ENCODE measurements at regions of chr2 and their contacts with region 1.

Region 1: DNA sequence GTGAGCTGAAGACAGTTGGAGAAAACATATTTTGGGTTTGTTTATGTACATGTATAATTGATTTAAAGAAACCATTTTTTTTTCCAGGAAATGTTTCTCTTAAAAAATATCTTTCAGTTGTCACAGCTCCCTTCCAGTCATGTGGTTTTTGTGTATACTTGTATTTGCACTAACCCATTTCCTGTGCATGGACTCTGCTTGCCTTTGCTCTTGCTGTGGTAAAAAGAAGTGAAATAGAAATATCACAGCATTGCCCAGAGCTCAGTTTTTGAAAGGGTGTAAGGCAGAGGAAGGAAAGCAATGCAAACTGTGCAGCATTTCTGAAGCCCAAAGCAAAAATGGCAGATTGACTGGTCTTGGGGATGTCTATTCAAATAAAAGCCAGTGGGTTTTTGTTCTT is 10.4 kb upstream of the DOCK10 start:
- DNase-seq: peak in 6 of 9 donors; percentile 53 to 82 (median 73)
- ATAC-seq: peak; percentile 90
- H3K4me3 ChIP-seq: peak overlapping the region; percentile 17
- H3K4me3 Mint-ChIP-seq: peak overlapping the region; percentile 43 to 77 (median 64)
- H3K27ac ChIP-seq: peak overlapping the region; percentile 55
- H3K27ac Mint-ChIP-seq: peak overlapping the region; percentile 60 to 94 (median 80)
- H3K4me1 ChIP-seq: peaks cover 42 to 45% of the 10 kb centered on the region in 2 donors
- H3K4me1 Mint-ChIP-seq: peaks cover 29 to 71% (median 67%) of the 10 kb centered on the region in 7 donors
- H3K27me3 ChIP-seq: no peaks in the 10 kb centered on the region
- H3K27me3 Mint-ChIP-seq: peaks cover 0 to 20% (median 0%) of the 10 kb centered on the region in 5 donors

Region 2: DNA sequence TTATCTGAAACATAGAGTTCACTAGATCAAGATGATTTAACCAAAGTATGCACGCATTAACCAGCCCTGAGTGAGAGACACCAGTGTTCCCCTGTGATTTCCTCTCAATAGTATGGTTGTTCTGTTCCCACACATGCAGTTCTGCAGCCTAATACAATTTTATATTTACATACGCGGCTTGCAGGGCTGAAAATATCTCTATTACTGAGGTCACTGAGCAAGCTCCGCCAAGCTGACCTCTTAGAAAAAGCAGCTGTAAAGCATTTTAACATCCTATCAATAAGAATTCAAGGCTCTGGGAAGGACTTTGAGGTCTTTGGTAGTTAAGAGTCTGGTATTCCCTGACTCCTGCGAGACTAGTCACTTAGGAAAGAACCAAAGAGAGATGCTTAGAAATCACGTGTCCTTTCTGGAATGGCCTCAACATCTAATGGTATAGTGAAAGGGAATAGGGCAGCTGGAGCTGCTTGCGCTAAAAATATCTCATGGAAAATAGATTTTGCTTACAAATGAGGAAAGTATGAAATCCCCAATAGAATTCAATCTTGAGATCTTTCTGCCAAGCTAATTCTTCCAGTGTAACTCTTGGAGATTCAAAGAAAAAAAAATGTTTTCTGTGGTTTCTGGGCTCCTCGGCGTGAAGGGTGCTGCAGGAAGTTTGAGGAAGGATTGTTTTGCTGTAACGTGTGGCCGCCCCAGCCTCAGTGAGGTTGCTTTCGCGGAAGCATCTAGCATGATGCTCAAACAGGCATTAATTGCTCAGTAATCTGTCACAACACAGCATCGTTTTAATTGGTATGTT is 69.6 kb before region 1 on chr2:
- CTCF ChIA-PET with region 1: no interaction called
- POLR2A ChIA-PET with region 1: no interaction called
- intact Hi-C with region 1: loop called in 1 of 2 experiments (anchors 2 kb)
- DNase-seq: peak in 7 of 9 donors; percentile 44 to 66 (median 52)
- ATAC-seq: peak; percentile 74
- H3K4me3 ChIP-seq: no peak overlapping the region
- H3K4me3 Mint-ChIP-seq: peak overlapping the region; percentile 63 to 85 (median 77)
- H3K27ac ChIP-seq: peak overlapping the region; percentile 50
- H3K27ac Mint-ChIP-seq: peak overlapping the region; percentile 85 to 97 (median 92)
- H3K4me1 ChIP-seq: peaks cover 42 to 58% of the 10 kb centered on the region in 2 donors
- H3K4me1 Mint-ChIP-seq: peaks cover 55 to 91% (median 89%) of the 10 kb centered on the region in 7 donors
- H3K27me3 ChIP-seq: no peaks in the 10 kb centered on the region
- H3K27me3 Mint-ChIP-seq: no peaks in the 10 kb centered on the region

Region 3: DNA sequence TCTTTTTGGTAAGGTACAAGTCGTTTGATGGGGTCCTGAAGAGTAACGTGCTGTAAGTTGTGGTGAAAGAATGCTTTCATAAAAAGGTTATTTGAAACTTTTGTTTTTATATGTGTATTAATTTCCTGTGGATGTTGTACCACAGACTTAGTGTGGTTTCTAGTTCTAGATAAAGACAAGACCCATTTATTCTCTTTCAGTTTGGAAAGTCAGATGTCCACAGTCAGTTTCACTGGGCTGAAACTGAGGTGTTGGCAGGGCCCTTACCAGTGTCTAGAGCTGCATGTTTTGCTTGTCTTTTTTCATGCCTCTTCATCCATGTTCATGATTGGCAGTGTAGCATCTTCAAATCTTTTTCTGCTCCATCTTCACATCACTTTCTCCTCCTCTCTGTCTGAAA is 11.7 kb after region 1 on chr2:
- CTCF ChIA-PET with region 1: interaction called, 3 read pairs
- POLR2A ChIA-PET with region 1: interaction called, 5 read pairs
- intact Hi-C with region 1: loop called in 1 of 2 experiments (anchors 1 kb)
- DNase-seq: no peak
- ATAC-seq: peak; percentile 24
- H3K4me3 ChIP-seq: no peak overlapping the region
- H3K4me3 Mint-ChIP-seq: peak overlapping the region; percentile 6 to 62 (median 40)
- H3K27ac ChIP-seq: no peak overlapping the region
- H3K27ac Mint-ChIP-seq: peak overlapping the region in 8 of 9 donors; percentile 26 to 80 (median 61)
- H3K4me1 ChIP-seq: peaks cover 10 to 14% of the 10 kb centered on the region in 2 donors
- H3K4me1 Mint-ChIP-seq: peaks cover 11 to 42% (median 35%) of the 10 kb centered on the region in 7 donors
- H3K27me3 ChIP-seq: no peaks in the 10 kb centered on the region
- H3K27me3 Mint-ChIP-seq: no peaks in the 10 kb centered on the region

Region 4: DNA sequence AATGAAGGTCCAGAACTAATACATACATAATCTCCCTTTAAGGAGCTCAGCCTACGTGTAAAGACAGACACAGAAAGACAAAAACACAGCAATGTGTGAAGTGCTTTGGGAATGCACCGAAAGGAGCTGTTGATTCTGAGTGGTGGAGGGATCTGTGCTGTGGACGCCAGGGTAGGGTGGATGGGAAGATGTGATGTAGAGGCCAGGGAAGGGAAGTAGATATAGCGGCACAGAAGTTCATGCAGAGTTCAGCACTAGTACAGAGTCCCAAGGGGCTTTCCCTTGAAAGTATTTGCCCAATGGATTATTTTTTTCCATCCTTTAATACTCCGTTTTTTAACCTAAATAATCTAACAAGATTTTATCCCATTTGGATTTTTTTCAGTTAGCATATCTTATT is 21.7 kb after region 1 on chr2:
- CTCF ChIA-PET with region 1: no interaction called
- POLR2A ChIA-PET with region 1: no interaction called
- intact Hi-C with region 1: loop called in 1 of 2 experiments (anchors 2 kb)
- DNase-seq: no peak
- ATAC-seq: no peak
- H3K4me3 ChIP-seq: no peak overlapping the region
- H3K4me3 Mint-ChIP-seq: no peak overlapping the region
- H3K27ac ChIP-seq: no peak overlapping the region
- H3K27ac Mint-ChIP-seq: peak overlapping the region in 2 of 9 donors; percentile 7 to 13
- H3K4me1 ChIP-seq: no peaks in the 10 kb centered on the region
- H3K4me1 Mint-ChIP-seq: peaks cover 1 to 28% (median 8%) of the 10 kb centered on the region in 7 donors
- H3K27me3 ChIP-seq: no peaks in the 10 kb centered on the region
- H3K27me3 Mint-ChIP-seq: peaks cover 0 to 30% (median 0%) of the 10 kb centered on the region in 5 donors

Region 5: GRCh38 chr2:225091336-225091735 is 38.6 kb after region 1 on chr2:
- CTCF ChIA-PET with region 1: interaction called, 3 read pairs
- POLR2A ChIA-PET with region 1: no interaction called
- intact Hi-C with region 1: loop called in 1 of 2 experiments (anchors 2 kb)
- DNase-seq: no peak
- ATAC-seq: no peak
- H3K4me3 ChIP-seq: no peak overlapping the region
- H3K4me3 Mint-ChIP-seq: no peak overlapping the region
- H3K27ac ChIP-seq: no peak overlapping the region
- H3K27ac Mint-ChIP-seq: no peak overlapping the region
- H3K4me1 ChIP-seq: peaks cover 0 to 4% of the 10 kb centered on the region in 2 donors
- H3K4me1 Mint-ChIP-seq: peaks cover 5 to 17% (median 9%) of the 10 kb centered on the region in 7 donors
- H3K27me3 ChIP-seq: no peaks in the 10 kb centered on the region
- H3K27me3 Mint-ChIP-seq: peaks cover 0 to 39% (median 0%) of the 10 kb centered on the region in 5 donors

Region 6: DNA sequence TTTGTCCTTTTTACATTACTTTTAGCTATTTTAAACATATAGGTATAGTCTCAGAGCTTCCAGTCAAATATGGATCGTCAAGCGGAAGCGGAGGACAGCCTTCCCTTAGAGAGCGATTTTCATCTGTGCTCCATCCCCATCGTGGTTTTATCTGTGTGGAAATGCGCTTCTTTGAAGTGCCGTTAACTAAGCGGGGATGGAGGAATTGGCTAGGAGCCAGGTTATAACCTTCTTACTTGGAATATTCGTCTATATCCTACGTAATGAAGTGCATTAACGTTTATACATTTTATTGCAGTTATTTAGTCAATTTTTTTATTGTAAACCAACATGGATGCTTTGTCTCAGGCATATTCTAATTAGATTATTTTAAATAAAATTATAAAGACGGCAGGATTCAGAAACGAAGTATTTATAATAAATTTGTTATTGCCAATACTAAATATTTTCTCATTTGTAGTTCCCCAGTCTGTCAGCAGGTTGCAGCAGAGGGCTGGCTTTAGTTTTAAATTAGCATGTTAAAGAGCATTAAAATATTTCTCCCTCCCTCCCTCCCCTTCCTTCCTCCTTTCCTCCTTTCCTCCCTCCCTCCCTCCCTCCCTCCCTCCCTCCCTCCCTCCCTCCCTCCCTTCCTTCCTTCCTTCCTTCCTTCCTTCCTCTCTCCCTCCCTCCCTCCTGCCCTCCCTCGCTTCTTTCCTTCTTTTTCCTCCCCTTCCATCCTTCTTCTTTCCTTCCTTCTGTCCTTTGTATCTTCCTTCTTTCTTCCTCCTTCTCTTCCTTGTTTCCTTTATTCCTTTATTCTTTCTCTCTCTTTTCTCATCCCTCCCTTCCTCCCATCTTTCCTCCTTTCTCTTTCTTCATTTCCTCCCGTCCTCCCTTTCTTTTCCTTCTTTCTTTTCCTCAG is 70.1 kb after region 1 on chr2:
- CTCF ChIA-PET with region 1: no interaction called
- POLR2A ChIA-PET with region 1: no interaction called
- intact Hi-C with region 1: loop called in 1 of 2 experiments (anchors 2 kb)
- DNase-seq: peak in 4 of 9 donors; percentile 15 to 28 (median 22)
- ATAC-seq: no peak
- H3K4me3 ChIP-seq: no peak overlapping the region
- H3K4me3 Mint-ChIP-seq: peak overlapping the region in 1 of 10 donors; percentile 48
- H3K27ac ChIP-seq: no peak overlapping the region
- H3K27ac Mint-ChIP-seq: peak overlapping the region in 4 of 9 donors; percentile 12 to 83 (median 44)
- H3K4me1 ChIP-seq: no peaks in the 10 kb centered on the region
- H3K4me1 Mint-ChIP-seq: peaks cover 0 to 13% (median 5%) of the 10 kb centered on the region in 7 donors
- H3K27me3 ChIP-seq: no peaks in the 10 kb centered on the region
- H3K27me3 Mint-ChIP-seq: peaks cover 0 to 14% (median 7%) of the 10 kb centered on the region in 5 donors

Measured in naive thymus-derived CD4-positive, alpha-beta T cell (primary cell).